H1 (cell line): ENCODE measurements at regions of chr11 and their contacts with region 1.

Region 1: DNA sequence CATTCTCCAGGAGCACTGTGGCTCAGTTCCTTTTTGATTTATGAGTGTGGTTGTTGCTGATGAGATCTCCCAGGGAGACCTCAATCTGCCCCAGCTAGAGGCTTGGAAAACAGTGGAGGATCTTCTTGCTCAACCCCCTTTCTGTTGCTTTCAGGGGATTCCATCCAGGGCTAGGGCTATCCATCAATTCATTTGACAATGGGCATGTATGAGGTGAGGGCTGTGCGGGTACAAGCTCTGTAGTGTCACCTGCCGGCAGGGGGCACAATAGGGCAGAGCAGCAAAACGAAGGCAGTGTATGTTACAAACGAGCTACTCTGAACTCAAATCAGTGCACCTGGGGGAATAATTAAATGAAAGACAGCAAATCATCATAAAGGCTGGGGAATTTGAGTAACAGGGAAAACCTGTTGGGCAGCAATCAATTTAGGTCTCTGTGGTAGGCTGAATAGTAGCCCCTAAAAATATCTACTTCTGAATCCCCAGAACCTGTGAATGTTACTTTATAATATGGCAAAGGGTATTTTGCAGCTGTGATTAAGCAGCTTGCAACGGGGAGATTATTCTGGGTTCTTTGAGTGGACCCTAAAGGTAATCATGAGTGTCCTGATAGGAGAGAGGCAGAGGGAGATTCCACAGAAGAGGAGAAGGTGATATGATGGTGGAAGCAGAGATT is 170.3 kb upstream of the ZBED5 start:
- DNase-seq: peak; percentile 49 to 88
- H3K4me3 ChIP-seq: no peak overlapping the region
- H3K27ac ChIP-seq: no peak overlapping the region
- H3K4me1 ChIP-seq: no peaks in the 10 kb centered on the region
- H3K27me3 ChIP-seq: no peaks in the 10 kb centered on the region
- CTCF ChIP-seq: peak; percentile 76 to 91 (median 87)
- EP300 ChIP-seq: no peak
- POLR2A ChIP-seq: no peak
- RAD21 ChIP-seq: peak; percentile 88 to 90

Region 2: DNA sequence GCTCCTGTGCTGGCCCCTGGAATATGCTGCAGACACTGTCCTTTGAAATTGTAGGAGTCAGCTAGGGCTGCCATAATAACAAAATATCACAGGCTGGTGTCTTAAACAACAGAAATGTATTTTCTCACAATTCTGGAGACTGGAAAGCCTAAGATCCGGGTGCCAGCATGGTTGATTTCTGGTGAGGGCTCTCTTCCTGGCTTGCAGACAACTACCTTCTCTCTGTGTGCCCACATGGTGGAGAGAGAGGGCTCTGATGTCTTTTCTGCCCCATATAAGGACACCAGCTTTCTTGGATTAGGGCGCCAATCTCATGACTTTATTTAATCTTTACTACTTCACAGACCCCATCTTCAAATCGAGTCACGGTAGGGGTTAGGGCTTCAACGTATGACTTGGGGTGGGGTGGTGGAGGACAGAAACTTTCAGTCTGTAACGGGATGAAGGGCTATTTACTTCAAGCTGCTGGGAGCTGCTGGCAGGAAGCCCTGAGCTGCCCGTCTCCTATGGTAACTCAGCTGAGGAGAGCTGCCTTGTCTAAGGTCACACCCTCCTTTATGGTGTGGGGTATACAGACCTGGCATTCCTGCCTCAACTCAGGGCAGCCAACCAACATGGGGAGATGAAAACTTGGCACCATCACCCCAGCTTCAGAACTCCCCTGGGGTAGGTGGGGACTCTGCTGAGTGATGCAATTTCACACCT is 27.4 kb before region 1 on chr11:
- CTCF ChIA-PET with region 1: interaction called, 21 read pairs
- POLR2A ChIA-PET with region 1: no interaction called
- DNase-seq: no peak
- H3K4me3 ChIP-seq: no peak overlapping the region
- H3K27ac ChIP-seq: no peak overlapping the region
- H3K4me1 ChIP-seq: no peaks in the 10 kb centered on the region
- H3K27me3 ChIP-seq: no peaks in the 10 kb centered on the region; a peak in 1 of 7 replicates
- CTCF ChIP-seq: no peak
- EP300 ChIP-seq: no peak
- POLR2A ChIP-seq: no peak
- RAD21 ChIP-seq: no peak

Region 3: GRCh38 chr11:11069841-11070835 is 42.0 kb after region 1 on chr11:
- CTCF ChIA-PET with region 1: interaction called, 34 read pairs
- POLR2A ChIA-PET with region 1: no interaction called
- DNase-seq: no peak
- H3K4me3 ChIP-seq: no peak overlapping the region
- H3K27ac ChIP-seq: no peak overlapping the region
- H3K4me1 ChIP-seq: peaks cover 1 to 11% (median 8%) of the 10 kb centered on the region in 4 experiments
- H3K27me3 ChIP-seq: 0 out of 7 replicates have a peak, but pooled peaks cover 0 to 4% (median 0%) of the 10 kb centered on the region in 4 experiments
- CTCF ChIP-seq: no peak
- EP300 ChIP-seq: no peak
- POLR2A ChIP-seq: no peak
- RAD21 ChIP-seq: no peak

Region 4: GRCh38 chr11:11105358-11105757 is 77.2 kb after region 1 on chr11:
- CTCF ChIA-PET with region 1: interaction called, 10 read pairs
- POLR2A ChIA-PET with region 1: no interaction called
- DNase-seq: no peak
- H3K4me3 ChIP-seq: no peak overlapping the region
- H3K27ac ChIP-seq: no peak overlapping the region
- H3K4me1 ChIP-seq: no peaks in the 10 kb centered on the region
- H3K27me3 ChIP-seq: no peaks in the 10 kb centered on the region
- CTCF ChIP-seq: no peak
- EP300 ChIP-seq: no peak
- POLR2A ChIP-seq: no peak
- RAD21 ChIP-seq: no peak

Region 5: DNA sequence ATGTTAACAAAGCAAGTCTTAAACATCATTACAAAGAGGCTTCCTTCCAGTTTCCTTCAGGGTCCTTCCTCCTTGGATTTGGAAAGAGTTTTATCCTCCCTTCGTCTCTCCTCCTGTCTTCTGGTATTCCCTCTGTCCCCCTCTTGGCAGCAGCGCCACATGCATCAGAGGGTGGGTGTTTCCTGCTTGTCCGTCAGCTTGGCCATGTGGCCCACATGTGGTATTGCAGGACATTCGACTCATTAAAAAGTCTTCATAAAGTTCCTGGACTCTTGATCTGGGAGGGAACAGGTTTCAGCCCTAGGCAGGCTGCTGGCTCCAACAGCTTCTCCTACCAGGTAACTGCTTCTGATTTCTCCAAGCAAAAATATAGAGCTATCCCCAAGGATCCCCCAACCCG is 135.1 kb after region 1 on chr11:
- CTCF ChIA-PET with region 1: interaction called, 11 read pairs
- POLR2A ChIA-PET with region 1: no interaction called
- DNase-seq: no peak
- H3K4me3 ChIP-seq: no peak overlapping the region
- H3K27ac ChIP-seq: no peak overlapping the region
- H3K4me1 ChIP-seq: peaks cover 0 to 2% (median 0%) of the 10 kb centered on the region in 4 experiments; a peak in 1 of 7 replicates
- H3K27me3 ChIP-seq: peaks cover 0 to 2% (median 0%) of the 10 kb centered on the region in 4 experiments; a peak in 2 of 7 replicates
- CTCF ChIP-seq: peak; percentile 32 to 48 (median 43)
- EP300 ChIP-seq: no peak
- POLR2A ChIP-seq: no peak
- RAD21 ChIP-seq: peak in 1 of 2 experiments; percentile 36; a peak in 2 of 4 replicates

Region 6: GRCh38 chr11:11243590-11244469 is 215.7 kb after region 1 on chr11:
- CTCF ChIA-PET with region 1: interaction called, 11 read pairs
- POLR2A ChIA-PET with region 1: no interaction called
- DNase-seq: peak in 1 of 2 experiments; percentile 67
- H3K4me3 ChIP-seq: no peak overlapping the region
- H3K27ac ChIP-seq: peak overlapping the region; percentile 9; the same call in 1 of the 2 replicates
- H3K4me1 ChIP-seq: peaks cover 2 to 5% (median 3%) of the 10 kb centered on the region in 4 experiments; a peak in 5 of 7 replicates
- H3K27me3 ChIP-seq: no peaks in the 10 kb centered on the region; a peak in 1 of 7 replicates
- CTCF ChIP-seq: no peak
- EP300 ChIP-seq: 0 out of 3 replicates have a peak, but pooled peaks of 1 of the 2 experiments have one; percentile 31
- POLR2A ChIP-seq: no peak
- RAD21 ChIP-seq: no peak